ENCODE measurements at regions of chr1 and their contacts with region 1.

Region 1: DNA sequence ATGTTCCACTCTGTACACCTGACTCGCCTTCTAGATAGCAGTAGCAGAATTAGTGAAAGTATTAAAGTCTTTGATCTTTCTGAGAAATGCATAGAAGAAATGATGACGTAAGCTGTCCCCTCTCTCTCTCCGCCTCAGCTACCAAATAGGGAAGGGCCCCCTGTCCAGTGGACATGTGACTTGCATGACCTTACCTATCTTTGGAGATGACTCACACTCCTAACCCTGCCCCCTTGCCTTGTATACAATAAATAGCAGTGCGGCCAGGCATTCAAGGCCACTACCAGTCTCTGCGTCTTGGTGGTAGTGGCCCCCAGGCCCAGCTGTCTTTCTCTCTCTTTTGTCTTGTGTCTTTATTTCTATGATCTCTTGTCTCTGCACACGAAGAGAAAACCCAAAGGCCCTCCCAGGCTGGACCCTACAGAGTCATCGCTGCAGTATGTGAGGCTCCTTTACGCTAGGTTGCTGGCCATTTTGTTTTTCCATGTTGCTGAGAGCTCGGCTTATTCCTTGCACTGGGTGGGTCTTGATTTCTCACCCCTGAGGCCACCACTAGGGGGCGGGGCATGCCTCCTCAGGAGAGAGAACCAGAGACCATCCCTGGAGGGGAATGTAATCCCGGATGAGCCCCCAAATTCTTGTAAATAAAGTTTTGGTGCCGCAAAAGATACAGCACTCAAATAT is 16.0 kb upstream of the ZBTB8B start:
- DNase-seq: peak; percentile 57
- H3K4me3 ChIP-seq: no peak overlapping the region
- H3K27ac ChIP-seq: no peak overlapping the region
- H3K4me1 ChIP-seq: no peaks in the 10 kb centered on the region
- H3K27me3 ChIP-seq: no peaks in the 10 kb centered on the region
- CTCF ChIP-seq: 0 out of 2 replicates have a peak, but pooled peaks have one; percentile 17

Region 2: GRCh38 chr1:32786856-32787255 is 337.9 kb after region 1 on chr1:
- CTCF ChIA-PET with region 1: no interaction called
- POLR2A ChIA-PET with region 1: no interaction called
- intact Hi-C with region 1: no loop called
- DNase-seq: peak; percentile 40
- H3K4me3 ChIP-seq: no peak overlapping the region
- H3K27ac ChIP-seq: no peak overlapping the region
- H3K4me1 ChIP-seq: no peaks in the 10 kb centered on the region
- H3K27me3 ChIP-seq: no peaks in the 10 kb centered on the region
- CTCF ChIP-seq: peak; percentile 28; the same call in 1 of the 2 replicates

Region 3: GRCh38 chr1:33080885-33081553 is 632.1 kb after region 1 on chr1 and contains the start of gene AZIN2:
- CTCF ChIA-PET with region 1: no interaction called
- POLR2A ChIA-PET with region 1: no interaction called
- intact Hi-C with region 1: loop called (anchors 10 kb)
- DNase-seq: peak; percentile 95
- H3K4me3 ChIP-seq: peak within 1 kb of the TSS; percentile 68
- H3K27ac ChIP-seq: peak within 1 kb of the TSS; percentile 58
- H3K4me1 ChIP-seq: peaks cover 4% of the 10 kb centered on the region
- H3K27me3 ChIP-seq: no peaks in the 10 kb centered on the region
- CTCF ChIP-seq: no peak
- total RNA-seq, gene AZIN2: 3.6 and 4.6 TPM in 2 replicates